ENCODE measurements at regions of chr2 and their contacts with region 1.

Region 1: DNA sequence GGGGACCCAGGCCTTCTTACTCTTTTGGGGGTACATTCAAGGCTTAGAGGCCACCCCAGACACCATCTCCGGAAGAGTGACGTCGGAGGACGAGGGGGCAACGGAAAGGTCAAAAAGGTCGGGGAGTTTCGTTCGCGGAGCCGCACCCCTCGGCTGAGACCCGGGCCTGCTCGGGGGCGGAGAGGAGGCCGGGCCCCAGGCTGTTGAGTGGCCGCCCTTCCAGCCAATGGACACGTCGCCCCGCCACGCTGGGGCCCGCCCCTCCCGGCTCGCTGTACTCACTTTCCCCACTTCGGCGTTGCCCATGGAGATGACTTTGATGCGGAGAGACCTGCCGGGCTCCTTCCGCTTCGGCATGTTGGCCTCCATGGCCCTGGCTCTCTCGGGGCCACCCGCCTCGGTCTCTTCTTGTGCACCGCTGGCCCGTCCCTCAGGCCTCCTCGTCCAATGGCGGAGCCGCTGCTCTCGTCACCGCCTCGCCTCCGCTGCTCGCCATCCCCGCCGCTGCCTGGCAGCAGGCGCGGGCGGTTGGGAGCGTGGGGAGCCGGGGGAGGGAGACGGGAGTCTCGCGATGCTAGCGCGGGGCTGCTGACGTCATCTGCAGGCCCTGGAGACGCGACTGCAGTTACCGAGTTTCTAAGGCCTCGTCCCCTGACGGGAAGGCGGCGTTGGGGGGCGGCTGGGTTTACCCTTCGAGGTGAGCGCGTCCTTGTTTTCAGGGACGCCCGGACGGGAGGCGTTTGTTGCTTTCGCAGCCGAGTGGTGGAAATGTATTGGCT is at the start of gene DNAJC27:
- DNase-seq: peak; percentile 97
- H3K4me3 Mint-ChIP-seq: peak within 1 kb of the TSS; percentile 99
- H3K27ac Mint-ChIP-seq: peak within 1 kb of the TSS; percentile 100
- H3K4me1 Mint-ChIP-seq: peaks cover 6% of the 10 kb centered on the region
- H3K27me3 Mint-ChIP-seq: no peaks in the 10 kb centered on the region
- CTCF ChIP-seq: no peak
- total RNA-seq, gene DNAJC27: 4.6 and 4.9 TPM in 2 replicates

Region 2: DNA sequence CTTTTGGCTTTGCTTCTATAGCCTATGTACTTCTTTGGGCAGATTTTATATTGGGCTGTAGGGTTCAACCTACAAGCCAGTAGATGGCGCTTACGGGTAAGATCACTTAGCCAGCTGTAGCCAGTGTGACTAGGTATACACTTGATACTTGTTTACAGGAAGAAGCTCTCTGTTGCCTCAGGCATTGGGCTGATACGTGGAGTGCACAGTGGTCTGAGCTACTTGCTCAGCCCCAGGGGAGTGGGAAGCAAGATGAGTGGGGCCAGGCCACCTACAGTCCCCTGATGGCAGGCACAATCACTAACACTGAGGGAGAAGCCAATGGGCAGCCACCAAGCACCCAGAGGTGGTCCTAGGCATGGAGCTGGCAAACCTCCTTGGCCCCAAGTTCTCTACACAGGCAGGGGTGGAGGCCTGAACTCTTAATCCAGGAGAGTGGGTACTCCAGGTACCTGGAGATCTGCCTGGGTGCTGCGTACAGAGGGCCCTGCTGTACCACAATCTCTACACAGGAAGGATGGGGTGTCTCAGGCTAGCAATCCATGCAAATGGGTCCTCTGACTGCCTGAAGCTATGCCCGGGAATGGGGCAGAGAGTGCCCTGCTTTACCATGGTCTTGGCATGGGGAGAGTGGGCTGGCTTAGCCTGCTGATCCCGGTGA is 358.4 kb before region 1 on chr2:
- CTCF ChIA-PET with region 1: no interaction called
- intact Hi-C with region 1: no loop called
- DNase-seq: peak; percentile 30
- H3K4me3 Mint-ChIP-seq: no peak overlapping the region
- H3K27ac Mint-ChIP-seq: no peak overlapping the region
- H3K4me1 Mint-ChIP-seq: no peaks in the 10 kb centered on the region
- H3K27me3 Mint-ChIP-seq: no peaks in the 10 kb centered on the region
- CTCF ChIP-seq: peak; percentile 43

Region 3: GRCh38 chr2:24871852-24872323 is 99.8 kb before region 1 on chr2:
- CTCF ChIA-PET with region 1: no interaction called
- intact Hi-C with region 1: no loop called
- DNase-seq: no peak
- H3K4me3 Mint-ChIP-seq: no peak overlapping the region
- H3K27ac Mint-ChIP-seq: no peak overlapping the region
- H3K4me1 Mint-ChIP-seq: no peaks in the 10 kb centered on the region
- H3K27me3 Mint-ChIP-seq: no peaks in the 10 kb centered on the region
- CTCF ChIP-seq: no peak

Region 4: GRCh38 chr2:24959761-24960160 is 12.0 kb before region 1 on chr2:
- CTCF ChIA-PET with region 1: no interaction called
- intact Hi-C with region 1: no loop called
- DNase-seq: no peak
- H3K4me3 Mint-ChIP-seq: no peak overlapping the region
- H3K27ac Mint-ChIP-seq: no peak overlapping the region
- H3K4me1 Mint-ChIP-seq: no peaks in the 10 kb centered on the region
- H3K27me3 Mint-ChIP-seq: no peaks in the 10 kb centered on the region
- CTCF ChIP-seq: no peak

Region 5: GRCh38 chr2:25041928-25042320 is 70.2 kb after region 1 on chr2 and contains the start of gene EFR3B:
- CTCF ChIA-PET with region 1: interaction called, 5 read pairs
- intact Hi-C with region 1: loop called (anchors 1 kb)
- DNase-seq: peak; percentile 96
- H3K4me3 Mint-ChIP-seq: peak within 1 kb of the TSS; percentile 90
- H3K27ac Mint-ChIP-seq: no peak within 1 kb of the TSS
- H3K4me1 Mint-ChIP-seq: peaks cover 12% of the 10 kb centered on the region
- H3K27me3 Mint-ChIP-seq: peaks cover 56% of the 10 kb centered on the region
- CTCF ChIP-seq: no peak
- total RNA-seq, gene EFR3B: 0.10 and 0.17 TPM in 2 replicates

Region 6: GRCh38 chr2:25131567-25132298 is 160.0 kb after region 1 on chr2:
- CTCF ChIA-PET with region 1: interaction called, 33 read pairs
- intact Hi-C with region 1: loop called (anchors 1 kb)
- DNase-seq: peak; percentile 9
- H3K4me3 Mint-ChIP-seq: peak overlapping the region; percentile 44
- H3K27ac Mint-ChIP-seq: no peak overlapping the region
- H3K4me1 Mint-ChIP-seq: no peaks in the 10 kb centered on the region
- H3K27me3 Mint-ChIP-seq: peaks cover 70% of the 10 kb centered on the region
- CTCF ChIP-seq: no peak

Region 7: DNA sequence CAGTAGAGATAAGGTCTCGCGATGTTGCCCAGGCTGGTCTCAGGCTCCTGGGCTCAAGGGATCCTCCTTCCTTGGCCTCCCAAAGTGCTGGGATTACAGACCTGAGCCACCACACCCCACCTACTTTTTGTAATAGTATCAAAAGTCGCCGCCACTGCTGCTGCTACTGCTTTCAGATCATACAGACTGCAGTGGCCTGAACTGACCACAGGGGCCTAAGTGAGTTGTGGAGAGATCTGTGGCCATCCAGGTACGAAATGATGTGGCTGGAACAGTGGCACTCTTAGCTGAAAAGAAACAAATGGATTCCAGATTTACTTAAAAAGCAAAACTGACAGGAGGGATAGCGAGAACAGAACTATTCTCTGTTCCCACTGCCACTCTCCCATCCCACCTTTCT is 229.5 kb after region 1 on chr2:
- CTCF ChIA-PET with region 1: interaction called, 5 read pairs
- intact Hi-C with region 1: loop called (anchors 2 kb)
- DNase-seq: no peak
- H3K4me3 Mint-ChIP-seq: no peak overlapping the region
- H3K27ac Mint-ChIP-seq: no peak overlapping the region
- H3K4me1 Mint-ChIP-seq: peaks cover 23% of the 10 kb centered on the region
- H3K27me3 Mint-ChIP-seq: no peaks in the 10 kb centered on the region
- CTCF ChIP-seq: no peak

Region 8: DNA sequence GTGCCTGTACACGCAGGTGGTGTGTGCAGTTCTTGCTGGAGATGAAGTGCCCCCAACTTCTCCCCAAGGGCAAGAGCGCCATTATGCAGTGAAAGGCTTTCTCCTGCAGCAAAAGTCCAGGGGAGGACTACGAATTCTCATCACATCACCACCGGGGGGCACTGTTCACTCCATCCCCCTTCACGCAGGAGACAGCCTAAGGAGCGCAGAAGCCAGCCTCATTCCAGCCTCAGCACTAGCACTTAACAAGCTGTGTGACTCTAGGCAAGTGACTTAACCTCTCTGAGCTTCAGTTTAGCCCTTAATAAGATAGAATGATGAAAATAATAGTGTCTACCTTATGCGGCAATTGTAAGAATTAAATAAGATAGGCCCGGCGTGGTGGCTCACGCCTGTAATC is 337.7 kb after region 1 on chr2:
- CTCF ChIA-PET with region 1: no interaction called
- intact Hi-C with region 1: no loop called
- DNase-seq: peak; percentile 54
- H3K4me3 Mint-ChIP-seq: no peak overlapping the region
- H3K27ac Mint-ChIP-seq: no peak overlapping the region
- H3K4me1 Mint-ChIP-seq: peaks cover 15% of the 10 kb centered on the region
- H3K27me3 Mint-ChIP-seq: no peaks in the 10 kb centered on the region
- CTCF ChIP-seq: no peak

Measured in Calu3 (cell line).